ENCODE measurements at regions of chr2 and their contacts with region 1.

Region 1: GRCh38 chr2:85496436-85496835 is 42.5 kb upstream of the MAT2A start:
- DNase-seq: no peak
- ATAC-seq: no peak
- H3K4me3 ChIP-seq: no peak overlapping the region
- H3K27ac ChIP-seq: no peak overlapping the region
- H3K4me1 ChIP-seq: peaks cover 21% of the 10 kb centered on the region
- H3K27me3 ChIP-seq: no peaks in the 10 kb centered on the region
- CTCF ChIP-seq: no peak

Region 2: GRCh38 chr2:85369500-85369899 is 126.9 kb before region 1 on chr2:
- CTCF ChIA-PET with region 1: no interaction called
- POLR2A ChIA-PET with region 1: no interaction called
- intact Hi-C with region 1: no loop called
- DNase-seq: peak; percentile 83
- ATAC-seq: peak; percentile 100
- H3K4me3 ChIP-seq: no peak overlapping the region
- H3K27ac ChIP-seq: 0 out of 2 replicates have a peak overlapping the region, but pooled peaks have one; percentile 15
- H3K4me1 ChIP-seq: peaks cover 14% of the 10 kb centered on the region
- H3K27me3 ChIP-seq: no peaks in the 10 kb centered on the region
- CTCF ChIP-seq: no peak

Region 3: DNA sequence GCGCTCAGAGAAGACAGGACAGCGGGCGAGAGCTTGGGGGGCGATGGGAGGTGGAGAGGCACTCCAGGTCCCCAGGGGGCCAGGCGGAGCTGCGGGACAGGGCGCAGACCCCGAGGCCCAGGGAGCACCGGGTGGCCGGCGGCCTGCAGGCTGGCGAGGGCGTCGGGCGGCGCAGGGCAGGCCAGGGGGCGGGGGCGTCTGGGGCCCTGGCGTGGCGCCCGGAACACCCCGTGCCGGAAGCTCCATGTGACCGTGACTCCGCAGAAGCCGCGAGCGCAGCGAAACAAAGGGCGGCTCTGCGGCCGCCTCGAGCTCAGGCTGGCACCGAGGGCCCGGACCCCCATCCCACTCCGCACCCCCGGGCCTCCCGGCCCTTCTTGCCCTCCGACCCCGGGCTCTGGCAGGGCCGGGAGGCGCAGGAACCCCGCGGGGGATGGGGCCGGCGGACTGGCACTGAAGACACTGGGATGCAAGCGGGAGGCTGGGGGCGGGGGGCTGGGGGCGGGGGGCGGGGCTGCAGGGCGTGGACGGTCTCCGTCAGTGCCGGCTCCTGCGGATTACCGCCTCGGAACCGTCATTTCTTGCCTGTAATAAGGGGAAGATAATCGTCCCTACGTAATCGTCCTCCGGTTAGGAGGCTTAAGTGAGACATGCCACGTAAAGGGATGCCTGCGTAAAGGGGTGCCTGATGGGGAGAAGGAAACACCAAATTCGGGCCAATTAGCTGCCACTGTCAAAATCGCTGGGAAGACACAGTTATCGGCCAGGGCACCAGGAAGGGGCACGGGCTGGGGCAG is 58.8 kb before region 1 on chr2:
- CTCF ChIA-PET with region 1: no interaction called
- POLR2A ChIA-PET with region 1: no interaction called
- intact Hi-C with region 1: loop called (anchors 5 kb)
- DNase-seq: peak; percentile 36
- ATAC-seq: peak; percentile 5
- H3K4me3 ChIP-seq: peak overlapping the region; percentile 42; the same call in 1 of the 2 replicates
- H3K27ac ChIP-seq: no peak overlapping the region
- H3K4me1 ChIP-seq: peaks cover 34% of the 10 kb centered on the region
- H3K27me3 ChIP-seq: no peaks in the 10 kb centered on the region
- CTCF ChIP-seq: no peak

Region 4: DNA sequence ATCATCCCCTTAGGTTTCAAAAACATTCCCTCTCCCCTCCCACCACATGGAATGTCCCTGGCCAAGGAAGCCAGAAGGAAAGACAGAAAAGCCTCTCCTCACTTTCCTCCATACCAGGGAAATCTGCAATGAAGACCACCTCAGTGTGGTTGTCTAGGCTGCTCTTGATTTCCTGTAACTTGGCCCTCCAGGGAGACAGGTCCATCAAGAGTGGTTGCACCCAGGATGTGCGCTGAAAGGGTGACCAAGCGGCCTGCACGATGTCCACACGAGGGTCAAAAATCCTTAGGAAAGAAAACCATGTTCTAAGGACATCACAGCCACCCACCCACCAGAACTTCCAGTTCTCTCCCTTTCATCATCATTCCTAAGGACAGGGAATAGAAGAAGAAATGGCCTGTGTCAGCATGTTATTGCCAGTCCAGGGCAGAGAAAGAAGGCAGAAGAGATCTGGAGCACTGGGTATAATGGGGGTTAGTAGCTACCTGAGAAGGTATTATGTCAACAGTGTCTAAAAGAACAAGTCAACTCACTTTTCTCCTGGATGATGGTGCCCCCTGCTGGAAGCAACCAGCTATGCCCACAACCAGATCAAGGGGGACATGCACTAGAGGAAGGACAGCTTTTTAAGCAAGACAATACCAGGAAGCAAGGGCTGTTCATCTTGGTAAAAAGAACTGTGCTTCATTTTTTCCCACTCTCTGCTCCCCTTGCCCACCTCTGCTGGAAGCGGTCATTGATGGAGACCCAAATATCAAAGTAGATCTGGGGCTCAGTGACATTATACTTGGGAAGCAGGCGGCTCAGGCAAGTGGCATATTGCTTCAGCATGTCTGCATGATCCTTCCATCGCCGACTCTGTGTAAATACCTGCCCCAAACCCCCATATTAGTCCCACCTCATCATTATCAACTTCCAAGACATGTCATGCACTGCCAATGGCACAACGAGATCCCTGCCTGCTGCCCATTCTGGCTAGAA is 55.6 kb after region 1 on chr2:
- CTCF ChIA-PET with region 1: interaction called, 3 read pairs
- POLR2A ChIA-PET with region 1: no interaction called
- intact Hi-C with region 1: loop called (anchors 2 kb)
- DNase-seq: peak; percentile 92
- ATAC-seq: peak; percentile 41
- H3K4me3 ChIP-seq: no peak overlapping the region
- H3K27ac ChIP-seq: no peak overlapping the region
- H3K4me1 ChIP-seq: peaks cover 16% of the 10 kb centered on the region
- H3K27me3 ChIP-seq: no peaks in the 10 kb centered on the region
- CTCF ChIP-seq: peak; percentile 96

Measured in PC-3 (cell line).